ENCODE measurements at regions of chr2 and their contacts with region 1.

Region 1: DNA sequence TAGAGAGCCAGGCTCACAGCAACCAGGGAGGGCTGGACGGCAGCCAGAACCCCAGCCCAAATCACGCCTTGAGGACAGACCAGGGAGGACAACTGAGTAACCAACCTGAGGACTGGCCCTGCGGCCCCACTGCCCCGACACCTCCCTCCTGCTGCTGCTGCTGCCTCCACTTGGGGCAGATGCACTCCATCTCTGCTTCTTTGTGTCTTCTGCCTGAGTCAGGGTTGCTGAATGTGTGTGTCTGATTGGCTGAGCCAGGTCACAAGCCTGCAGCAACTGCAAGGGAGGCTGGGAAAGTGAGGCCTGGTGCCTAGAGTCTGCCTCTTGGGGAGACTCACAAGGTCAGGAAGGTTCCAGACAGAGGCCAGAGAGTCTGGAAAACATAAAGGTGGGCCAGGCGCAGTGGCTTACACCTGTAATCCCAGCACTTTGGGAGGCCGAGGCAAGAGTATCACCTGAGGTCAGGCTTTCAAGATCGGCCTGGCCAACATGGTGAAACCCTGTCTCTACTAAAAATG is 83.4 kb downstream of the ZFP36L2 start:
- DNase-seq: peak; percentile 46
- H3K4me3 Mint-ChIP-seq: peak overlapping the region; percentile 57
- H3K27ac Mint-ChIP-seq: peak overlapping the region; percentile 48
- H3K4me1 Mint-ChIP-seq: peaks cover 69% of the 10 kb centered on the region
- H3K27me3 Mint-ChIP-seq: no peaks in the 10 kb centered on the region

Region 2: GRCh38 chr2:43105586-43106558 is 37.1 kb before region 1 on chr2:
- CTCF ChIA-PET with region 1: no interaction called
- POLR2A ChIA-PET with region 1: no interaction called
- DNase-seq: no peak
- H3K4me3 Mint-ChIP-seq: no peak overlapping the region
- H3K27ac Mint-ChIP-seq: peak overlapping the region; percentile 68
- H3K4me1 Mint-ChIP-seq: peaks cover 4% of the 10 kb centered on the region
- H3K27me3 Mint-ChIP-seq: no peaks in the 10 kb centered on the region

Region 3: DNA sequence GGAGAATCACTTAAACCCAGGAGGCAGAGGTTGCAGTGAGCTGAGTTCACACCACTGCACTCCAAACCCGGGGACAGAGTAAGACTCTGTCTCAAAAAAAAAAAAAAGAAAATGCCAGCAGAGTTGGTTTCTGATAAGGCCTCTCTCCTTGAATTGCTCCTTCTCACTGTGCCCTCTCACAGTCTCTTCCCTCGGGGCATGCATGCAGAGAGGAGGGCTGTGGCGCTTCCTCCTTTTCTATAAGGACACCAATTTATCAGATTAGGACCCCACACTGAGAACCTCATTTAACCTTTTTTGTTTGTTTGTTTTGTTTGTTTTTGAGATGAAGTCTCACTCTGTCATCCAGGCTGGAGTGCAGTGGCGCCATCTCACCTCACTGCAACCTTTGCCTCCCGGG is 27.1 kb before region 1 on chr2:
- CTCF ChIA-PET with region 1: no interaction called
- POLR2A ChIA-PET with region 1: no interaction called
- DNase-seq: no peak
- H3K4me3 Mint-ChIP-seq: no peak overlapping the region
- H3K27ac Mint-ChIP-seq: no peak overlapping the region
- H3K4me1 Mint-ChIP-seq: no peaks in the 10 kb centered on the region
- H3K27me3 Mint-ChIP-seq: no peaks in the 10 kb centered on the region

Region 4: GRCh38 chr2:43131024-43131889 is 11.7 kb before region 1 on chr2:
- CTCF ChIA-PET with region 1: interaction called, 50 read pairs
- POLR2A ChIA-PET with region 1: no interaction called
- DNase-seq: peak; percentile 91
- H3K4me3 Mint-ChIP-seq: peak overlapping the region; percentile 59
- H3K27ac Mint-ChIP-seq: peak overlapping the region; percentile 97
- H3K4me1 Mint-ChIP-seq: peaks cover 93% of the 10 kb centered on the region
- H3K27me3 Mint-ChIP-seq: no peaks in the 10 kb centered on the region

Region 5: GRCh38 chr2:43293744-43294695 is 151.0 kb after region 1 on chr2:
- CTCF ChIA-PET with region 1: no interaction called
- POLR2A ChIA-PET with region 1: no interaction called
- DNase-seq: peak; percentile 49
- H3K4me3 Mint-ChIP-seq: no peak overlapping the region
- H3K27ac Mint-ChIP-seq: peak overlapping the region; percentile 83
- H3K4me1 Mint-ChIP-seq: peaks cover 21% of the 10 kb centered on the region
- H3K27me3 Mint-ChIP-seq: no peaks in the 10 kb centered on the region

Region 6: DNA sequence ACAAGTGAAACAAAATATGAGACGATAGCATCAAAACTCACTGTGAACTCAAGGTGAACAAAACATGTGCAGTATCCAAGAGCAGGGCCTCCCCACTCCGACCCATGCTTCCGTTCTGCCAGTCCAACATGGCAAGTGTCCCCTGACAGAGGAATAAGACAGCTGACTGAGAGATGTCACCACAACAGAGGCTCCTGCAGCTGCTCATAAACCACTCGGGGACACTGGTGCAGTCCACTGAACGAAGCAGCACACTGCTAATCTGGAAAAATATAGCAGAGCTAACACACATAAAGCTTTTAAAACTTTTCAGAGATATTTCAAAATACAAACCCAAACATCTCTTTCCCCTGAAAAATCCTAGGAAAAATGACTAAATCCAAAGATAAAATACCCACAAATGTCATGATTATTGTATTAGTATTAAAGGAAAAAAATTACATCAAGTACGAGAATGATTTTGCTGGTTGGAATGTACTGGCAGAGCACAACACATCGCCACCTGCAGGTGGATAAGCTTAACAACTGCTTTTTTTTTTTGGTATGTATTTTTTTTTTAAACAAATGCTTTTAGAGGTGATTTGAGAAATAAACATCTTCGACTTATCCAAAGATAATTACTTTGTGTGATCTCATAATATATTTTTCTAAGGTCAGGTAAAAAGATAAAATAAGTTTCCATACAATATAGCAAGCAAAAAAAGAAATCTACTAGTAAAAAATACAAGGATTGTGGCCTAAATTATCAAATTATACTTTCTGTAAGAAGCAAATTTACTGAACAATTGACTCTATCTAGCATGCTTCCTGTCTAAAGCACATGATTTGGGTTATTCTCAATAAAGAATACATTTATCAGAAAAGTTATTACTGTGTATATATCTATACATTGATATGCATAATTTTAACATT is 434.3 kb after region 1 on chr2:
- CTCF ChIA-PET with region 1: no interaction called
- POLR2A ChIA-PET with region 1: no interaction called
- DNase-seq: peak; percentile 37
- H3K4me3 Mint-ChIP-seq: no peak overlapping the region
- H3K27ac Mint-ChIP-seq: no peak overlapping the region
- H3K4me1 Mint-ChIP-seq: peaks cover 15% of the 10 kb centered on the region
- H3K27me3 Mint-ChIP-seq: no peaks in the 10 kb centered on the region

Measured in activated CD4-positive, alpha-beta T cell treated with anti-CD3 and anti-CD28 coated beads, Interleukin-2, amount 10 ng/mL, durations not matched to agents 7 days and 5 days (primary cell).